ENCODE measurements at regions of chr7 and their contacts with region 1.

Region 1: GRCh38 chr7:38398725-38399321 is 125.4 kb upstream of the TARP start:
- DNase-seq: peak in 3 of 5 donors; percentile 28 to 66 (median 41)
- ATAC-seq: peak in 2 of 4 donors; percentile 46 to 70
- H3K4me3 ChIP-seq: no peak overlapping the region
- H3K27ac ChIP-seq: no peak overlapping the region
- H3K4me1 ChIP-seq: peaks cover 0 to 8% (median 0%) of the 10 kb centered on the region in 12 donors
- H3K27me3 ChIP-seq: no peaks in the 10 kb centered on the region
- CTCF ChIP-seq: peak; percentile 75 to 97 (median 90)
- POLR2A ChIP-seq: no peak

Region 2: DNA sequence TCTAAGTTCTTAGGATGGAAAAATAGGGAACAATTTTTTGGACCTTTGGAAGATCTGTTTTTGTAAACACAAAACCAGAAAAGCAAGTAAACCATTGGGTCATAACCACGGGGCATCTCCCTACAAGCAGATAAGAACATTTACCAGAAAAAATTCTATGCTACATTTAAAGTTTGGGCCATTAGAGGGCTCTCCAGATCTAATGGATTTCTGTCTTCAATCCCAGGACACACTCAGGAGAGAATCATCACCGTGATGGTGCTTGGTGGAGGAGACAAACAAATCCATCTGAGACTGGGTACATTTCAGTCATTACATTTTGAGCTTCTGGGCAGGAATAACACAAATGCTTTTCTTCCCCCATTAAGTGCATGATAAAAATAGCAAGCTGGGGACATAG is 53.0 kb after region 1 on chr7:
- intact Hi-C with region 1: no loop called
- DNase-seq: no peak
- ATAC-seq: peak in 3 of 4 donors; percentile 45 to 72 (median 63)
- H3K4me3 ChIP-seq: no peak overlapping the region
- H3K27ac ChIP-seq: no peak overlapping the region
- H3K4me1 ChIP-seq: peaks cover 0 to 16% (median 7%) of the 10 kb centered on the region in 12 donors
- H3K27me3 ChIP-seq: no peaks in the 10 kb centered on the region
- CTCF ChIP-seq: peak in 11 of 12 donors; percentile 12 to 49 (median 30)
- POLR2A ChIP-seq: no peak

Region 3: DNA sequence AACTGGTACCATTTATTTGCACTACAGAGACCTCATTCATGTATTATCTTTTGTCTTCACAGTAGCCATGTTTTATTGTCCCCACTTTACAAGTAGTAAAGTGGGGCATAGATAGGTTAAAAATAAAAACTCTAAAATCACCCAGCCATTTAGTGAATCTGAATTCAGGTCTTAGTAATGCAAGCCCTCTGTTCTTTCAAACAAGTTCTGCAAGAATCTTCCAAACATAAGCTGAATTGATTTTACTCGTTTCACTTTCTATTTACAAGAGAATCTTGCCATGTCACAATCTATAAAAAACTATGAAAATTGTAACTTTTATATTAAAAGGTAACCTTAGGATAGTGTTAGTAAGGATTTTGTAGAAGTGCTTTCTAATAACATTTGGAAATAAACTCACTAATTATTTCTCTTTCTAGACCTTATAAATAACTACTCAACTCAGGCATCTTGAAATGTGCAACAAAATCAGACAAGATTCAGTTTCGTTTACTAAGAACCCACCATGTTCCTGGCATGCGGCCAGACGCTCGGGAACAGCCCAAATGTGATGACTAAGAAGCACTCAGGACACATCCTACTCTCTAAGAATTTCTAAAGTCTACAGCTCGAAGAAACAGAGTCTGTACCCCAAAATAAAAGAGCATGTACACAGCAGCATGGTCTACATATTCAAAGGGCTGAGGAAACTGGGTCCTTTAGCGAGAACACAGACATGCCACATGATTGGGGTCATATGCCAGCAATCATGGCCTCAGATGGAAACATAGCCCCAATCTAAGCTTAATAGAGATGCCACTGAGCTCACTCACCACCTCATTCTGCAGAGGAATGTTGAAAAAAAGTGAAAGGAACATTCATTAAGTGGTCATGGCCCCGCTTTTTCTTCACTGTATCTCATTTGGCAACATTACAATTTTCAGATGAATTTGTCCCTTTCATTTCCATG is 64.7 kb after region 1 on chr7:
- intact Hi-C with region 1: no loop called
- DNase-seq: peak in 4 of 5 donors; percentile 37 to 86 (median 52)
- ATAC-seq: peak in 1 of 4 donors; percentile 33
- H3K4me3 ChIP-seq: peak overlapping the region in 1 of 12 donors; percentile 31
- H3K27ac ChIP-seq: no peak overlapping the region
- H3K4me1 ChIP-seq: peaks cover 0 to 3% (median 0%) of the 10 kb centered on the region in 12 donors
- H3K27me3 ChIP-seq: no peaks in the 10 kb centered on the region
- CTCF ChIP-seq: no peak
- POLR2A ChIP-seq: no peak

Region 4: DNA sequence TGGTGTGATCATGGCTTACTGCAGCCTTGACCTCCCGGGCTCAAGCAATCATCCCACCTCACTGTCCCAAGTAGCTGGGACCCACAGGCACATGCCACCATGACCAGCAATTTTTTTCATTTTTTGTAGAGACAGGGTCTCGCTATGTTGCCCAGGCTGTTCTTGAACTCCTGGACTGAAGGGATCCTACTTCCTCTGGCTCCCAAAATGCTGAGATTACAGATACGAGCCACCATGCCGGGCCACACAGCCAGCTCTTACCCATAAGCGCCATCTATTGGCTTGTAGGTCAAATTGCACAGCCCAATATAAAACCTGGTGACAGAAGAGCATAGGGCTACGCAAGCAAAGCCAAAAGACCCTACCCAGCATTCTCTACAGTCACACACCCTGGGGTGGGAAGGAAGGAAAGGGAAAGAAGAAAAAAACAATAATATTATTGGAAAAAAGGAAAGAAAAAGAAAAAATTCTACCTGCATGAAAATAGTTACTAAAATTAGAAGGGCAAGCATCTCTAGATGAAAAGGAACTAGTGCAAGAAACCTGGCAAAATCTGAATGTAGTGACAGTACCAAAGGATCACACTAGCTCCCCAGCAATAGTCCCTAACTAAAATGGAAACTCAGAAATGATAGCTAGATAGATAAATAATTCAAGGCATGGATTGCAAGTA is 261.7 kb after region 1 on chr7:
- intact Hi-C with region 1: loop called in 8 of 10 experiments (anchors 2 to 5 kb)
- DNase-seq: peak in 2 of 5 donors; percentile 27 to 35
- ATAC-seq: peak in 3 of 4 donors; percentile 36 to 56 (median 42)
- H3K4me3 ChIP-seq: no peak overlapping the region
- H3K27ac ChIP-seq: no peak overlapping the region
- H3K4me1 ChIP-seq: peaks cover 0 to 20% (median 0%) of the 10 kb centered on the region in 12 donors
- H3K27me3 ChIP-seq: no peaks in the 10 kb centered on the region
- CTCF ChIP-seq: peak; percentile 33 to 63 (median 54)
- POLR2A ChIP-seq: no peak

Region 5: DNA sequence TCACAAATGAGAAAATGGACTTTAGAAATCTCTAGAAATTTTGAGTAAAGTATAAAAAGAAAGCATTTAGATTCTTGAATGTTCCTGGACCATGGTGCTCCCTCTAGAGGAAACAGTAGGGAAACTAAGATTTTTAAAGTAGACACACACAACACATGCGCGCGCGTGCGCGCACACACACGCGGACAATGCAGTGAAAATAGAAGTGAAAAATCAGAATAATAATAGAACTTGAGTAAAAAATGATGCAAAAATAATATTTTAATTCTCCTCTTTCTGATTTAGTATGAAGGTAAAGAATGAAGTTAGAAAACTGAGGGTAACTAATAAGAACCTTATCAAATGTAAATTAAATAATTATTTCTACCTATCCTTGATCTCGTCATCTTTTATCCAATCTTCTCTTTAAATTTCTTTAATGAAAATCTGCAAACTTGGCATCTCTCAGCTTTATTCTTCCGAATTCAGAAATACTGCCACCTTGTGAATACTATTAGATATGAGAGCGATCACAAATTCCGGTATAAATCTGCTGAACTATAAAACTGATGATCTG is 349.3 kb after region 1 on chr7:
- intact Hi-C with region 1: loop called in 4 of 10 experiments (anchors 5 to 10 kb)
- DNase-seq: no peak
- ATAC-seq: peak in 1 of 4 donors; percentile 62
- H3K4me3 ChIP-seq: peak overlapping the region in 2 of 12 donors; percentile 21 to 24
- H3K27ac ChIP-seq: no peak overlapping the region
- H3K4me1 ChIP-seq: peaks cover 0 to 4% (median 0%) of the 10 kb centered on the region in 12 donors
- H3K27me3 ChIP-seq: no peaks in the 10 kb centered on the region
- CTCF ChIP-seq: peak in 11 of 12 donors; percentile 10 to 59 (median 31)
- POLR2A ChIP-seq: no peak

Region 6: GRCh38 chr7:39510864-39511354 is 1112.1 kb after region 1 on chr7:
- intact Hi-C with region 1: loop called in 5 of 10 experiments (anchors 5 to 10 kb)
- DNase-seq: no peak
- ATAC-seq: no peak
- H3K4me3 ChIP-seq: no peak overlapping the region
- H3K27ac ChIP-seq: no peak overlapping the region
- H3K4me1 ChIP-seq: no peaks in the 10 kb centered on the region
- H3K27me3 ChIP-seq: no peaks in the 10 kb centered on the region
- CTCF ChIP-seq: no peak
- POLR2A ChIP-seq: no peak

Region 7: DNA sequence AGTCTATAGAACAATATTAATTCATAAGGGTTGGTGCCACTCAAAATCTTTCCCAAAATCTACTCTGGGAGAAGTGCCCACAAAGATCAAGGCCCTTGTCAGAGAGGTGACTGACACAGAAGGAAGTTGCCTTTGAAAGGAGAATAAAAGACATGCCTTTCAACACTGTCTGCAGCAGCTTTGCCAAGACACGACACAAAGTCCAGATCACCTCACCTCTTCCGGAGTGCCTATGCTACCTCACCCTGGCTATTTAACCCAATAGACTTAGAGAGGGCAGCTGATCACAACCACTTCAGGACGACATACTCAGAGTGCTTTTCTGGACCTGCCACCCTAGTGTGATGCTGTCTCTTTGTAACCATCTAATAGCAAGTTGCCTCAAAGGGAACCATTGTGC is 1118.4 kb after region 1 on chr7:
- intact Hi-C with region 1: loop called in 8 of 10 experiments (anchors 5 to 10 kb)
- DNase-seq: no peak
- ATAC-seq: no peak
- H3K4me3 ChIP-seq: no peak overlapping the region
- H3K27ac ChIP-seq: no peak overlapping the region
- H3K4me1 ChIP-seq: peaks cover 0 to 6% (median 0%) of the 10 kb centered on the region in 12 donors
- H3K27me3 ChIP-seq: peaks cover 0 to 9% (median 0%) of the 10 kb centered on the region in 9 donors
- CTCF ChIP-seq: no peak
- POLR2A ChIP-seq: no peak

Region 8: DNA sequence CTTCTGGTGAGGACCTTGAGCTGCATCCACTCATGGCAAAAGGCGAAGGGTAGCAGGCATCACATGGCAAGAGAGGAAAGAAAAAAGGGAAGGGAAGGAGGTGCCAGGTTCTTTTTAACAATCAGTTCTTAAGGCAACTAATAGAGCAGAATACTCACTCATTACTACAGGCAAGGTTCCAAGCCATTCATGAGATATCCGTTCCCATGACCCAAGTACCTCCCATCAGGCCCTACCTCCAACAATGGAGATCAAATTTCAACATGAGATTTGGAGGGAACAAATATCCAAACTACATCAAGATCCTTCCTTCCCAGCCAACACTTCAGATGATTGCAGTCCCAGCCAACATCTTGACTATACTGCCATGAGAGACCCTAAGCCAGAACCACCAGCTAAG is 1128.5 kb after region 1 on chr7:
- intact Hi-C with region 1: loop called in 3 of 10 experiments (anchors 5 to 10 kb)
- DNase-seq: no peak
- ATAC-seq: peak in 1 of 4 donors; percentile 32
- H3K4me3 ChIP-seq: no peak overlapping the region
- H3K27ac ChIP-seq: no peak overlapping the region
- H3K4me1 ChIP-seq: no peaks in the 10 kb centered on the region
- H3K27me3 ChIP-seq: peaks cover 0 to 7% (median 0%) of the 10 kb centered on the region in 9 donors
- CTCF ChIP-seq: no peak
- POLR2A ChIP-seq: no peak

Measured in heart left ventricle (tissue), 16 donors.